Right cardiac atrium (tissue), 5 donors: ENCODE measurements at regions of chr12 and their contacts with region 1.

Region 1: DNA sequence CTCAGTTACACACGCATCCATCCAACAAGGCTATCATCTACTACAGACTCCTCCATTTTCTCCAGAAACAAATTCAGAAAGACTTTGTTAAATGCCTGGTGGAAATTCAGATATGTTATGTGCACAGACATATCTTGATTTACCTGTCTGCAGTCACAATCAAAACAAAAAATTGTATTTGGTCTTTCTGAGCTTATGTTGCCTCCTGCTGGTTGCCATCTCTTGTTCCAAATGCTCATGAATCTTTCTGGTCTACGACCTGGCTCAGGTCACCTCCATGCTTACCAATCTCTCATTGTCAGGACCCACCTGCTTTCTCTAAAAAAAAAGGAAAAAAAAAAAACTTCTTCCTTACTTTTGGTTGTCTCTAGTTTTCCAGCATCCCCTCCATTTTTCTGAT is 169.2 kb upstream of the PLXNC1 start:
- DNase-seq: no peak
- ATAC-seq: no peak
- H3K4me3 ChIP-seq: no peak overlapping the region
- H3K27ac ChIP-seq: peak overlapping the region; percentile 45
- H3K4me1 ChIP-seq: peaks cover 18% of the 10 kb centered on the region
- H3K27me3 ChIP-seq: no peaks in the 10 kb centered on the region

Region 2: DNA sequence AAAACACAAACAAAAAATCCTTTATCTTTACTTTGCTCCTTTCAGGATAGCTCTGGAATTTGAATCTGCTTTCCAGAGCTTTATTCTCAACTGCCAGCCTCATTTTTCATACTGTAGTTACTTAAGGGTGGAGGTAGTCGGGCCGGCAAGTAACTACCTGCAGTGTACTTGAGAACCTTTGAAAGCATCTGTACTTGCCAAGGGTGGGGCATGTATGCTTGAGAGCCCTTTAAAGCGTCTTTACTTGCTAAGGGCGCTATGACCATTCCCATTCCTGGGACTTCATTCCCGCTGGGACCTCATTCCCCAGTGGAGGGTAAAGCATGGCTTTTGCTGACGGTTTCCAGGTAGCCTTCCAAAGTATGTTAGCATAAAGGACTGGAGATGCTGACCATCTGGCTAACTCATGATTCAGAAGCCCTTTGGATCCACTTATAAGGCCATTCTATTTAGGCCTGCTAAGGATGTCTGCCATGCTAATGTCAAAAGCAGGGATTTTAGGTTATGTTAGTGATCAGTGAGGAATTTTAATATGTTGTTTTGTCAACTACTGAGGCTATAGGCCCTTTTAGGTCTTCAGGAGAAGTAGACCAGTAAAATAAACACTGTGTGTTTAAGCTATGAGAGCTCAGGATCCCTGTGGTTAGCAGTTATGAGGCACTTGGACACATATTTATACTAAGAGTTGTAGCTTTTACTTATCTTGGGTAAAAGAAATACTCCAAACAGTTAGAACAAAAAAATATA is 227.2 kb before region 1 on chr12:
- intact Hi-C with region 1: loop called in 2 of 4 experiments (anchors 10 kb)
- DNase-seq: no peak
- ATAC-seq: no peak
- H3K4me3 ChIP-seq: no peak overlapping the region
- H3K27ac ChIP-seq: no peak overlapping the region
- H3K4me1 ChIP-seq: peaks cover 6% of the 10 kb centered on the region
- H3K27me3 ChIP-seq: no peaks in the 10 kb centered on the region